ENCODE measurements at regions of chr1 and their contacts with region 1.

Region 1: GRCh38 chr1:65419681-65420589 is 533 bp upstream of the LEPR start:
- DNase-seq: peak; percentile 94 to 99 (median 98)
- ATAC-seq: peak; percentile 89 to 96 (median 92)
- H3K4me3 ChIP-seq: peak overlapping the region; percentile 94 to 98
- H3K4me3 Mint-ChIP-seq: no peak overlapping the region
- H3K27ac ChIP-seq: peak overlapping the region; percentile 69
- H3K27ac Mint-ChIP-seq: peak overlapping the region; percentile 93 to 96
- H3K4me1 ChIP-seq: peaks cover 3 to 17% of the 10 kb centered on the region in 2 experiments
- H3K4me1 Mint-ChIP-seq: peaks cover 12 to 24% (median 22%) of the 10 kb centered on the region in 3 donors
- H3K27me3 ChIP-seq: no peaks in the 10 kb centered on the region
- H3K27me3 Mint-ChIP-seq: no peaks in the 10 kb centered on the region

Region 2: GRCh38 chr1:65266476-65266875 is 153.5 kb before region 1 on chr1:
- CTCF ChIA-PET with region 1: interaction called in 1 of 2 experiments, 3 read pairs
- POLR2A ChIA-PET with region 1: interaction called, 3 to 13 read pairs
- DNase-seq: no peak
- ATAC-seq: no peak
- H3K4me3 ChIP-seq: no peak overlapping the region
- H3K4me3 Mint-ChIP-seq: peak overlapping the region; percentile 75 to 79 (median 78)
- H3K27ac ChIP-seq: no peak overlapping the region
- H3K27ac Mint-ChIP-seq: peak overlapping the region; percentile 41 to 62
- H3K4me1 ChIP-seq: peaks cover 7 to 10% of the 10 kb centered on the region in 2 experiments
- H3K4me1 Mint-ChIP-seq: peaks cover 15 to 27% (median 22%) of the 10 kb centered on the region in 3 donors
- H3K27me3 ChIP-seq: peaks cover 0 to 18% of the 10 kb centered on the region in 2 experiments
- H3K27me3 Mint-ChIP-seq: peaks cover 20 to 31% of the 10 kb centered on the region in 2 donors

Region 3: DNA sequence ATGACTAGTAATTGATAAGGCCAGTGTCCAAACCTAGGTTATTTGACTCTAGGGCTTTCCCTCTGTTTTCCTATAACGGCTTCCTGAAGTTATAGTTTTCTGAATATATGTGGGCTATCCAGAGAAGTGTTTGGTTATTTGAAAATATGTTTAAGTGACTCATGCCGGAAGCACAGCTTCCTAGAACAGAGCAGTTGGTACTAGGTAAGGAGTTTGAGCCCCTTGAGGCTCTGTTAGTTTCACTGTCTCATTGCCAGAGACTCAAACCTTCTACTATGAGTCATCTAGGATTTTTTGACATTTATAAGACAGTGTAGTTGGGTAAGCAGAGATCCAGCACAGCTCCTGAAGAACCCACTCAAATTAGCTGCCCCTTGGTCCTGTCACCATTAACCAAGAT is 26.6 kb before region 1 on chr1:
- CTCF ChIA-PET with region 1: no interaction called
- POLR2A ChIA-PET with region 1: no interaction called
- DNase-seq: no peak
- ATAC-seq: peak in 3 of 4 experiments; percentile 73 to 91 (median 83)
- H3K4me3 ChIP-seq: no peak overlapping the region
- H3K4me3 Mint-ChIP-seq: no peak overlapping the region
- H3K27ac ChIP-seq: no peak overlapping the region
- H3K27ac Mint-ChIP-seq: peak overlapping the region in 1 of 2 donors; percentile 15
- H3K4me1 ChIP-seq: no peaks in the 10 kb centered on the region
- H3K4me1 Mint-ChIP-seq: peaks cover 0 to 19% (median 8%) of the 10 kb centered on the region in 3 donors
- H3K27me3 ChIP-seq: no peaks in the 10 kb centered on the region
- H3K27me3 Mint-ChIP-seq: no peaks in the 10 kb centered on the region

Region 4: DNA sequence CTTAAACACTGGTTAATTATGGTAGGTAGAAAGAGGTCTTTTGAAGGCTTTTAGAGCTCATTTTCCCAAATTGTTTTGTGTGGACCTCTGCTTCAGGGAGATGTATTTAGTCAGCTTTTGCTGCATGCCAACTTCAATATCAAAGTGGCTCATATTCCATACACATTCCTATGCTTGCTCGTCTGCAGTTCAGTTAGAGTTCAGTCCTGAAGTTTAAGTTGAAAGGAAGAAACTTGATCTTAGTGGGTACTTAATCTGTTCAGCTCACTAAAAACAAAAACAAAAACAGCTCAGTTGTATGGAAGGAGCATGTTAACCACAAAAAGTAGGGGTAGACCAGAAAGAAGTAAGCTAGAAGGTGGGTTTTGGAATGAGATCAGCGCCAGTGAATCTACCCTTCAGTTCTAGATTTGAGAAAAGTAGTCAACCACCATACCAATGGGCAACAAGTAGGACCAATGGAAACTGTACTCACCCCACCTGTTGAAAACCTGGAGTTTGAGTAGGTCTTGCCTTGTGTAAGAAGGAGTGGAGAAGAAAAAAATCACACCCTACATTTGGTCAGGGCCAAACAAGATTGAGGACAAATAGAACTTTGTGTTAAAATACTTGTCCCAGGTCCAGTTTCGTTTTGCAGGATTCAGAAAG is 58.6 kb after region 1 on chr1:
- CTCF ChIA-PET with region 1: no interaction called
- POLR2A ChIA-PET with region 1: no interaction called
- DNase-seq: no peak
- ATAC-seq: no peak
- H3K4me3 ChIP-seq: no peak overlapping the region
- H3K4me3 Mint-ChIP-seq: no peak overlapping the region
- H3K27ac ChIP-seq: no peak overlapping the region
- H3K27ac Mint-ChIP-seq: no peak overlapping the region
- H3K4me1 ChIP-seq: no peaks in the 10 kb centered on the region
- H3K4me1 Mint-ChIP-seq: no peaks in the 10 kb centered on the region
- H3K27me3 ChIP-seq: no peaks in the 10 kb centered on the region
- H3K27me3 Mint-ChIP-seq: no peaks in the 10 kb centered on the region